ENCODE measurements at regions of chr5 and their contacts with region 1.

Region 1: GRCh38 chr5:89930591-89931392 is 478.8 kb downstream of the CETN3 start:
- DNase-seq: peak; percentile 4
- CTCF ChIP-seq: no peak

Region 2: DNA sequence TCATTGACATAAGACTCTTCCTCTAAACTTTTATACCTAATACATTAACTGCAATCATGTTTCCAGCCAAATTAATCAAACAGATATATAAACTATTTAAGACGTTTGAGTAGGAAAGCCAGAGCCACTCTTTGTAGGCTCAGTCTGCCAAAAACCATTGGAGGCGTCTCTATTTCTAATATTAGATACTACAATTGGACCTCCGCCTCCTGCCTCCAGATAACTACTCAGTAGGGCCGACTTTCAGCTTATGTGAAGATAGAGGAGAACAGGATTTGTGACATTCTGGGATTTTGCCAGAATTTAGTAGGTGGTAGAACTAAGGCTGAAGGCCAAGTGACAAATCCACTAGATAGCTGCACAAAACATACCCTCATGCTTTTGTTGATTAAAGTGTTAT is 15.7 kb after region 1 on chr5:
- CTCF ChIA-PET with region 1: interaction called, 10 read pairs
- POLR2A ChIA-PET with region 1: no interaction called
- DNase-seq: no peak
- CTCF ChIP-seq: no peak

Measured in GM10248 (cell line).